PC-3 (cell line): ENCODE measurements at regions of chr14 and their contacts with region 1.

Region 1: GRCh38 chr14:90256354-90257131 is at the start of gene PSMC1:
- DNase-seq: peak; percentile 94
- ATAC-seq: peak; percentile 91
- H3K4me3 ChIP-seq: peak within 1 kb of the TSS; percentile 99
- H3K27ac ChIP-seq: peak within 1 kb of the TSS; percentile 87
- H3K4me1 ChIP-seq: peaks cover 23% of the 10 kb centered on the region
- H3K27me3 ChIP-seq: no peaks in the 10 kb centered on the region
- CTCF ChIP-seq: no peak
- total RNA-seq, gene PSMC1: 160 and 208 TPM in 2 replicates

Region 2: GRCh38 chr14:90409209-90409730 is 152.7 kb after region 1 on chr14:
- CTCF ChIA-PET with region 1: no interaction called
- POLR2A ChIA-PET with region 1: no interaction called
- intact Hi-C with region 1: no loop called
- DNase-seq: peak; percentile 96
- ATAC-seq: peak; percentile 87
- H3K4me3 ChIP-seq: no peak overlapping the region
- H3K27ac ChIP-seq: peak overlapping the region; percentile 71
- H3K4me1 ChIP-seq: peaks cover 19% of the 10 kb centered on the region
- H3K27me3 ChIP-seq: no peaks in the 10 kb centered on the region
- CTCF ChIP-seq: no peak

Region 3: DNA sequence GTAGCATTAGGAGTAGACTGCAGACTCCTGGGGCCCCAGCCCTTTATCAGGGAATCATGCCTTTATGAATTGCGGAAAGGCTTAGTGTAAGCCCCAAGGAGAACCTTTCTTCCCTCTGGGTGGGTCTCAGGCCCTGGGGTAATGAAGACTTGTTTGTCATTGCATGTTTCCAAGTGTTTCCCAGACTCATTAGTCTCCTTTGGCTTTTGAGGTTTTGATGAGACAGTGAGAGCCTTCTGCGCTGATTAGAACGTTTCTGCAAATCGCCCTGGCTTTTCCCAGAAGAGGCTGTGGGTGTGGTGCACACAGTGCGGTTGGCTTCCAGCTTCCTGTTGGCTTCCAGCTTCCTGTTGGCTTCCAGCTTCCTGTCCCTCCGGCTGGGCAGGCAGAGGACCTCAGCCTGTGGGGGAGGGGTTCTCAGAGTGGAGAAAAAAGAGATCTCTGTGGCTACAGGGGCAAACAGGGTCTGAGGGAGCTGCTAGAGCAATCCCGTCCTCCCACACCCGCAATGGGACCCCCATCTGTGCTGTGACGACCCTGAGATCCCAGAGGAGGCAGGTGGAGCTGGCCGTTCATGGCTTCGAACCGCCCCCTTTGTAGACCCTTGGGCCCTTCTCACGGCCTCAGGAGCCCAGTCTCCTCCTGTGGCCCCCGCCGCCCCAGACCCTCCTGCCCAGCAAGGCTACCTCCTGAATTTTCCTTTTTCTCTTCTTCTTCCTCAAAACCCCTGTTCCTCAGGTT is 945.9 kb after region 1 on chr14:
- CTCF ChIA-PET with region 1: no interaction called
- POLR2A ChIA-PET with region 1: interaction called, 14 read pairs
- intact Hi-C with region 1: no loop called
- DNase-seq: peak; percentile 52
- ATAC-seq: peak; percentile 86
- H3K4me3 ChIP-seq: no peak overlapping the region
- H3K27ac ChIP-seq: no peak overlapping the region; the same call in 1 of the 2 replicates
- H3K4me1 ChIP-seq: peaks cover 9% of the 10 kb centered on the region
- H3K27me3 ChIP-seq: no peaks in the 10 kb centered on the region
- CTCF ChIP-seq: no peak